GM12878 (cell line): ENCODE measurements at regions of chr15 and their contacts with region 1.

Region 1: DNA sequence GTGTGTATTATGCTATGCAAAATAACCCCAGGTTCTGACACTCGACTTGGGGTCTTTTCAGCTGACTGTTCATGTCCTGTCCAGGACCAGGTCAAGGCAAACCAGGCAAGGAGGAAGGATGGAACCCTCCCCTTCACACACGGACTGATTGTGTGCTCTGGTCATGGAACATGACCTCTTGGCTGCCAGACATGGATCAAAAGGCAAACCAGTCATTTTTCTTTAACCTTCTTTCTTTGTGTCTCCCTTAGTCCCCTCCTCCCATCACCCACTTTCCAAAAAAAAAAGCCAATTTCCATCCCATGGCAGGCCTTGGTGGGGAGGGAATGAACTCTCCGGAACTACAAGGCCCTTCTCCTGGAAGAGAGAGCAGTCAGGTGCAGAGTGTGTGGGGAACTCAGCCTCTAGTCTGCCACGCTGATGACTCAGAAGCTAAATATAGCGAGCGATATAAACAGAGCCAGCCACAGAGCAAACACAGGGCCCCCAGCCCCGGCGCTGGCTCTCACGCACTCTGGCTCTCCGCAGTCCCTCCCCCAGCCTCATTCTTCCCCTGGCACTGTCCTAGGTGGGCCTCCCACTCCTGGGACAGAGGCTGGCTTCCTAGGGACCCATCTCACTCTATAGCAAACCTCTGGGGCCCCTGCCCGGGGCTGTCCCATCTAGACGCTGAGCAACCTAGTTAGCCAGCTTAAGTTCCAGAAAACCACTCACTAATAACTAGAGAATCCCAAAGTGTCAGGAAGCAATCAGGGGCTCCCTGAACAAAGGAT is 10.0 kb downstream of the BMF start:
- DNase-seq: peak; percentile 84
- ATAC-seq: peak; percentile 80
- H3K4me3 ChIP-seq: peak overlapping the region; percentile 46
- H3K27ac ChIP-seq: peak overlapping the region; percentile 100
- H3K4me1 ChIP-seq: peaks cover 97% of the 10 kb centered on the region
- H3K27me3 ChIP-seq: no peaks in the 10 kb centered on the region
- CTCF ChIP-seq: no peak
- EP300 ChIP-seq: peak; percentile 98 to 99
- POLR2A ChIP-seq: peak; percentile 73
- RAD21 ChIP-seq: no peak

Region 2: GRCh38 chr15:39920510-39921273 is 178.0 kb before region 1 on chr15:
- CTCF ChIA-PET with region 1: no interaction called
- POLR2A ChIA-PET with region 1: no interaction called
- RAD21 ChIA-PET with region 1: no interaction called
- SMC1A ChIA-PET with region 1: no interaction called
- in situ Hi-C with region 1: no loop called
- intact Hi-C with region 1: no loop called
- DNase-seq: peak; percentile 38
- ATAC-seq: peak; percentile 94
- H3K4me3 ChIP-seq: peak overlapping the region; percentile 73
- H3K27ac ChIP-seq: peak overlapping the region; percentile 39
- H3K4me1 ChIP-seq: peaks cover 5% of the 10 kb centered on the region
- H3K27me3 ChIP-seq: peaks cover 3 to 8% of the 10 kb centered on the region in 2 experiments; a peak in 3 of 4 replicates
- CTCF ChIP-seq: 0 out of 6 replicates have a peak, but pooled peaks of 2 of the 3 experiments have one; percentile 8 to 19
- EP300 ChIP-seq: no peak
- POLR2A ChIP-seq: peak; percentile 91
- RAD21 ChIP-seq: no peak

Region 3: GRCh38 chr15:40054605-40055545 is 43.8 kb before region 1 on chr15:
- CTCF ChIA-PET with region 1: interaction called, 776 read pairs
- POLR2A ChIA-PET with region 1: interaction called, 307 read pairs
- RAD21 ChIA-PET with region 1: interaction called, 903 read pairs
- SMC1A ChIA-PET with region 1: interaction called, 1,082 read pairs
- in situ Hi-C with region 1: loop called (anchors 10 kb)
- intact Hi-C with region 1: no loop called
- DNase-seq: no peak
- ATAC-seq: peak; percentile 86
- H3K4me3 ChIP-seq: no peak overlapping the region
- H3K27ac ChIP-seq: peak overlapping the region; percentile 89
- H3K4me1 ChIP-seq: peaks cover 58% of the 10 kb centered on the region
- H3K27me3 ChIP-seq: no peaks in the 10 kb centered on the region
- CTCF ChIP-seq: no peak
- EP300 ChIP-seq: peak; percentile 72 to 83; a peak in 3 of 4 replicates
- POLR2A ChIP-seq: peak; percentile 60
- RAD21 ChIP-seq: 0 out of 2 replicates have a peak, but pooled peaks have one; percentile 18

Region 4: GRCh38 chr15:40081691-40082194 is 16.9 kb before region 1 on chr15:
- CTCF ChIA-PET with region 1: interaction called, 20 read pairs
- POLR2A ChIA-PET with region 1: interaction called, 7 read pairs
- RAD21 ChIA-PET with region 1: interaction called, 20 read pairs
- SMC1A ChIA-PET with region 1: interaction called, 981 read pairs
- in situ Hi-C with region 1: no loop called
- intact Hi-C with region 1: no loop called
- DNase-seq: no peak
- ATAC-seq: peak; percentile 72
- H3K4me3 ChIP-seq: peak overlapping the region; percentile 12; the same call in 1 of the 2 replicates
- H3K27ac ChIP-seq: no peak overlapping the region; the same call in 1 of the 2 replicates
- H3K4me1 ChIP-seq: peaks cover 37% of the 10 kb centered on the region
- H3K27me3 ChIP-seq: no peaks in the 10 kb centered on the region
- CTCF ChIP-seq: no peak
- EP300 ChIP-seq: peak in 1 of 2 experiments; percentile 25; a peak in 1 of 4 replicates
- POLR2A ChIP-seq: no peak
- RAD21 ChIP-seq: no peak

Region 5: DNA sequence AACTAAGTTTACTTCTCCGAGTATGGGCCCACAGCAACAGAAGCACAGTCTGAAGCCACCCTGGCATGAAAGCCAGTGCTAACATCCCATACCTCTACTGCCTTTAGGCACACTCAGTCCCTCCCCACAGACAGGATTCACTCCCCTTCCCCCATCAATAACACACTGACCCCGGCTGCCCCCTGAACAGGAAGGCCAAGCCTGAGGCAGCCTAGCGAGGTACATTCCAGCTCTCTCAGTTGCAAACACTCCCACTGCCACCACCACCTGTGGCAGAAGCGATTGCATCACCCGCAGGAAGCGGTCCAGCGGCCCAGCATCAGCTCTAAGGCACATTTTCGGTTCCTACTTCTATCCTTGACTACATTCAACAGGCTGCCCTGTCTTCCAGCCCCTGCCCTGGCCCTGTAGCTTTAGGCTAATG is 17.0 kb after region 1 on chr15:
- CTCF ChIA-PET with region 1: interaction called, 72 read pairs
- POLR2A ChIA-PET with region 1: interaction called, 66 read pairs
- RAD21 ChIA-PET with region 1: interaction called, 111 read pairs
- SMC1A ChIA-PET with region 1: interaction called, 981 read pairs
- in situ Hi-C with region 1: no loop called
- intact Hi-C with region 1: no loop called
- DNase-seq: peak; percentile 83
- ATAC-seq: peak; percentile 97
- H3K4me3 ChIP-seq: no peak overlapping the region
- H3K27ac ChIP-seq: peak overlapping the region; percentile 69
- H3K4me1 ChIP-seq: peaks cover 30% of the 10 kb centered on the region
- H3K27me3 ChIP-seq: no peaks in the 10 kb centered on the region
- CTCF ChIP-seq: no peak
- EP300 ChIP-seq: peak; percentile 40 to 77; a peak in 3 of 4 replicates
- POLR2A ChIP-seq: peak; percentile 62
- RAD21 ChIP-seq: no peak